ENCODE measurements at regions of chr11 and their contacts with region 1.

Region 1: DNA sequence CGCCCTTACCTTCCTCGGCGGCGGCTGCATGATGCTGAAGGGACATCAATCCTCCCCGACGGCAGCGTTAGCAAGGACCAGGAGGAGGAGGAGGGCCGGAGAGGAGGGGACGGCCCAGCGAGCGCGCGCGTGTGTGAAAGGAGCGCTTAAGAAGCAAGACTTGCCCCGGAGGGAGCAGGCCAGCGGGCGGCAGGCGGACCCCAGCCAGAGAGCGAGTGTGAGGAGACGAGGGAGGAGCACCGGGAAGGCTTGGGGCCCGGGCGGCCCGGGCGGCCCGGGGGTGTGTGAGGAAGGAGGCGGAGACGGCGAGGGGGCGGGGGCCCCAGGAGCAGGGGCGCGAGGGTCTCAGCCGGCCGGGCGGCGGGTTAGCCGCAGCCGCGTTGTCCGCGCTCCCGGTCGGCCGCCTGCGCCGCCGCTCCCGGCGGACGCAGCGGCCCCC is 251 bp downstream of the FCHSD2 start:
- DNase-seq: no peak
- ATAC-seq: peak; percentile 25
- H3K4me3 ChIP-seq: peak overlapping the region; percentile 90
- H3K27ac ChIP-seq: peak overlapping the region; percentile 99
- H3K4me1 ChIP-seq: peaks cover 36% of the 10 kb centered on the region
- H3K27me3 ChIP-seq: no peaks in the 10 kb centered on the region
- CTCF ChIP-seq: 0 out of 6 replicates have a peak, but pooled peaks of 1 of the 3 experiments have one; percentile 0
- EP300 ChIP-seq: no peak
- POLR2A ChIP-seq: peak; percentile 65
- RAD21 ChIP-seq: no peak

Region 2: GRCh38 chr11:72238040-72238450 is 903.8 kb before region 1 on chr11:
- CTCF ChIA-PET with region 1: no interaction called
- POLR2A ChIA-PET with region 1: no interaction called
- RAD21 ChIA-PET with region 1: no interaction called
- SMC1A ChIA-PET with region 1: no interaction called
- in situ Hi-C with region 1: no loop called
- intact Hi-C with region 1: no loop called
- DNase-seq: no peak
- ATAC-seq: peak; percentile 76
- H3K4me3 ChIP-seq: no peak overlapping the region
- H3K27ac ChIP-seq: no peak overlapping the region
- H3K4me1 ChIP-seq: peaks cover 4% of the 10 kb centered on the region
- H3K27me3 ChIP-seq: peaks cover 5 to 11% of the 10 kb centered on the region in 2 experiments; a peak in 3 of 4 replicates
- CTCF ChIP-seq: peak; percentile 52 to 84 (median 74)
- EP300 ChIP-seq: no peak
- POLR2A ChIP-seq: 0 out of 2 replicates have a peak, but pooled peaks have one; percentile 16
- RAD21 ChIP-seq: peak; percentile 63

Region 3: GRCh38 chr11:72924568-72925190 is 217.2 kb before region 1 on chr11:
- CTCF ChIA-PET with region 1: interaction called, 12 read pairs
- POLR2A ChIA-PET with region 1: no interaction called
- RAD21 ChIA-PET with region 1: interaction called, 6 read pairs
- SMC1A ChIA-PET with region 1: interaction called, 16 read pairs
- in situ Hi-C with region 1: no loop called
- intact Hi-C with region 1: no loop called
- DNase-seq: peak; percentile 13
- ATAC-seq: peak; percentile 65
- H3K4me3 ChIP-seq: no peak overlapping the region
- H3K27ac ChIP-seq: no peak overlapping the region
- H3K4me1 ChIP-seq: no peaks in the 10 kb centered on the region
- H3K27me3 ChIP-seq: no peaks in the 10 kb centered on the region
- CTCF ChIP-seq: peak; percentile 42 to 55 (median 43); a peak in 4 of 6 replicates
- EP300 ChIP-seq: no peak
- POLR2A ChIP-seq: no peak
- RAD21 ChIP-seq: peak; percentile 76

Region 4: DNA sequence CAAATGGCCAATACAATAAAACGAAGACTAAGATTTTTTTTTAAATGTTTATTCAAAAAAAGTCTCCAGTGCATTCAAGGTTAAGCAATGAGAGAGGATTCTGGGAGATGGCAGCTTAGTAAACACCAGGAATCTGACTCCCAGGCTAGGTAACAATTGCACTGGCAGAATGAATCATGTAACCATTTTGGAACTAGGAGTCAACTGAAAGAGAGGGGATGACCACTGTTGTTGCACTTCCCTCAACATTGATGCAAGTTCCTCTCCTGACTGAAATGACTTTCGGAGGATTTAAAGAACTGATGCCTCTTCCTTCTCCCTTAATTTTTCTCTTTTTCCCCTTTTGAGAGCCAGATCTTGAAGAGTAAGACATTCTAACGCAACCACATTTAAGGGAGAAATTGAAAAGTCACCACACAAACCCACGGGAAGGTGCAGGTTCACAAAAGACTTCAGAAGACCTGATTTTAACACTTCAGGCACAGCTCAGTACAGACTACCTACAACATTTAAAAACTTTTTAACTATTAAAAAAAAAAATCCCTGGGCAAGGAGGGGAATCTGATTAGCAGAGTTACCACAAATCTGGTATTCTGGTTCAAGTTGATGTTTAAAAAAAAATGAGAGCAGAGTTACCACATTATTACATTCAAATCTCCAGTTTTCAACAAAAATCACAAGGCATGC is 56.5 kb before region 1 on chr11:
- CTCF ChIA-PET with region 1: no interaction called
- POLR2A ChIA-PET with region 1: interaction called, 3 read pairs
- RAD21 ChIA-PET with region 1: no interaction called
- SMC1A ChIA-PET with region 1: no interaction called
- in situ Hi-C with region 1: no loop called
- intact Hi-C with region 1: loop called (anchors 5 kb)
- DNase-seq: no peak
- ATAC-seq: peak; percentile 54
- H3K4me3 ChIP-seq: no peak overlapping the region
- H3K27ac ChIP-seq: peak overlapping the region; percentile 4; the same call in 1 of the 2 replicates
- H3K4me1 ChIP-seq: peaks cover 27% of the 10 kb centered on the region
- H3K27me3 ChIP-seq: no peaks in the 10 kb centered on the region
- CTCF ChIP-seq: no peak
- EP300 ChIP-seq: no peak
- POLR2A ChIP-seq: no peak
- RAD21 ChIP-seq: no peak

Region 5: GRCh38 chr11:73126804-73127480 is 14.9 kb before region 1 on chr11:
- CTCF ChIA-PET with region 1: interaction called, 16 read pairs
- POLR2A ChIA-PET with region 1: interaction called, 5 read pairs
- RAD21 ChIA-PET with region 1: interaction called, 5 read pairs
- SMC1A ChIA-PET with region 1: interaction called, 47 read pairs
- in situ Hi-C with region 1: no loop called
- intact Hi-C with region 1: no loop called
- DNase-seq: no peak
- ATAC-seq: no peak
- H3K4me3 ChIP-seq: no peak overlapping the region
- H3K27ac ChIP-seq: no peak overlapping the region
- H3K4me1 ChIP-seq: no peaks in the 10 kb centered on the region
- H3K27me3 ChIP-seq: no peaks in the 10 kb centered on the region
- CTCF ChIP-seq: no peak
- EP300 ChIP-seq: no peak
- POLR2A ChIP-seq: no peak
- RAD21 ChIP-seq: no peak

Region 6: DNA sequence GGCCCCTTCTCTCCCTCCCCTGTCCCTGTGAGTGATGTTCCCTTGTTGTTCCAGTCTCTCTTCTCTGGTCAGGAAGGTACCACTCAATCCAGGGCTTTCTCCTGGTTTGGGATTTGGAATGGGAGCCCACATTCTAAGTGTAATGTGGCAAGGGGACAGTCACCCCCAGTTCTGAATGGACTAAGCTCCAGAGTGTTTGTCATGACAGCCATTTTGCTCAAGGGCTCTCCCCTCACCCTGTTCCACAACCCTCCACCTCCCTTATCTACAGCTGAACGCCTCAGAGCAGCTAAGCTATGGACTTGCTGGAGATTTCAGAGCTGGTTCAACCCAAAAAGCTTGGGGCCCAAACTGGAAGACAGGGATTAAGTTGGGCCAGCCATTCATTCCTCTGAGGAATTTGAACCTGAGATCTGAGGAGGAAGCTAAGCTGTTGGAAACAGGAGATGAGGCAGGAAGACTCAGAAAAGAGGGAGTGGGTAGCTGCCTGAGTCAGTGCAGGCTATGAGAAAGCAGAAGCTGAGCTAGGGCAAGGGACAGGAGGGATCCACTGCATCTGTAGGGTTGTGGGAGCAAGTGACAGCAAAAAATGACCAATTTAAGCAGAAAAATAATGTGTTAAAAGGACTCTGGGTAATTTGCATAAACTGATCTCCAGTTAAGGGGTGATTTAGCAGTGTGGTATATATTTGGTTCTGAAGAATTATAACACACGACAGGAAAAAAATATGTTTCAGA is 23.1 kb after region 1 on chr11:
- CTCF ChIA-PET with region 1: interaction called, 77 read pairs
- POLR2A ChIA-PET with region 1: interaction called, 384 read pairs
- RAD21 ChIA-PET with region 1: interaction called, 441 read pairs
- SMC1A ChIA-PET with region 1: interaction called, 926 read pairs
- in situ Hi-C with region 1: no loop called
- intact Hi-C with region 1: no loop called
- DNase-seq: no peak
- ATAC-seq: peak; percentile 33; the same call in 2 of the 3 replicates
- H3K4me3 ChIP-seq: no peak overlapping the region
- H3K27ac ChIP-seq: no peak overlapping the region
- H3K4me1 ChIP-seq: peaks cover 16% of the 10 kb centered on the region
- H3K27me3 ChIP-seq: no peaks in the 10 kb centered on the region
- CTCF ChIP-seq: no peak
- EP300 ChIP-seq: no peak
- POLR2A ChIP-seq: no peak
- RAD21 ChIP-seq: no peak

Region 7: DNA sequence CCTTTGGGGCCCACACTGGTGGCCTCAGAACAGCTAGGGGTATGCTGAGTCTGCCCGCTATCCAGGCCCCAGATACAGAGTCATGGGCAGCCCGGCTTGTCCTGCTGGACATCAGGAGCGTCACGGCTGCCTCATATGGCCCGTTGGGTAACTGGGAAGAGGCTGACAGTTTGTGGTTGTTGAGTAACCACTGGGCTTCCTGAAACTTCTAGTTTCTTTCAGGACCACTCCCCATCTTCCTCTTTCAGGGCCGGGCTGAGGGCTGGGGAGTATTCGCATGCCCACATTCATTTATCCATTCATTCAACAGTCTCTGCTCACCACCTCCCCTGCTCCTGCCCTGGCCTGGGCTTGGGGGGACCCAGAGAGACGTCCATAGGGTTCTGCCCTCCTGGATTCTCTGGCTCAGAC is 62.8 kb after region 1 on chr11:
- CTCF ChIA-PET with region 1: no interaction called
- POLR2A ChIA-PET with region 1: no interaction called
- RAD21 ChIA-PET with region 1: no interaction called
- SMC1A ChIA-PET with region 1: no interaction called
- in situ Hi-C with region 1: no loop called
- intact Hi-C with region 1: no loop called
- DNase-seq: no peak
- ATAC-seq: no peak
- H3K4me3 ChIP-seq: no peak overlapping the region
- H3K27ac ChIP-seq: no peak overlapping the region
- H3K4me1 ChIP-seq: no peaks in the 10 kb centered on the region
- H3K27me3 ChIP-seq: no peaks in the 10 kb centered on the region
- CTCF ChIP-seq: no peak
- EP300 ChIP-seq: no peak
- POLR2A ChIP-seq: no peak
- RAD21 ChIP-seq: no peak

Region 8: GRCh38 chr11:73270016-73270854 is 128.4 kb after region 1 on chr11:
- CTCF ChIA-PET with region 1: no interaction called
- POLR2A ChIA-PET with region 1: no interaction called
- RAD21 ChIA-PET with region 1: no interaction called
- SMC1A ChIA-PET with region 1: no interaction called
- in situ Hi-C with region 1: no loop called
- intact Hi-C with region 1: no loop called
- DNase-seq: no peak
- ATAC-seq: peak; percentile 67
- H3K4me3 ChIP-seq: no peak overlapping the region
- H3K27ac ChIP-seq: no peak overlapping the region
- H3K4me1 ChIP-seq: peaks cover 36% of the 10 kb centered on the region
- H3K27me3 ChIP-seq: no peaks in the 10 kb centered on the region; a peak in 1 of 4 replicates
- CTCF ChIP-seq: no peak
- EP300 ChIP-seq: no peak
- POLR2A ChIP-seq: no peak
- RAD21 ChIP-seq: no peak

Measured in GM12878 (cell line).